MCF 10A (cell line): ENCODE measurements at regions of chr1 and their contacts with region 1.

Region 1: DNA sequence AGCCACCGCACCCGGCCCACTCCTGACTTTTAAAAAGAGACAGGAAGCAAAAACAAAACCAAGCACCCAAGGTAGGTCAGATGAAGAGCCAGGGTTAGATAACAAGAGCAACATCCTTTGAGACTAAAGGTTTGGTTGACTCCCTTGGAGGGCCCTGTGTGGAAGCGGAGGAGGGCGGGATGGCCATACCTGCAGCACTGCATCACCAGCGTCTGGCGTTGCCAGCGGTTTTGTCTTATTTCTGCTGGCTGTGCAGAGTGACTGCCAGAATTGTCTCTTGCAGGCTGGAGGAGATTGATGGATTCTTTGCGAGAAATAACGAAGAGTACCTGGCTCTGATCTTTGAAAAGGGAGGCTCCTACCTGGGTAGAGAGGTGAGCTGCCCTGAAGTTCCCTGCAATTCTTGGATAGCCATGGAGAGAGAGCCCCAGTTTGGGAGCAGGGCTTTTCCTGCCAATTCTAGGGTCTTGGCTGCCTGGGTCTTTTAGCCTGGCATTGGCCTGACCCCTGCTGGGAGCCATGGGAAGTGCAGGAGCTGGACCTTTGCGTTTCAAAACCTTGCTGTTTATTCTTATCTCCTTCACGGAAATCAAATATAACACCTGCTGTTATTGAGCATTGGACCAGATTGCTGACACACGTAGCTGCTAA is 24.0 kb downstream of the QSOX1 start:
- DNase-seq: peak; percentile 72
- H3K4me3 Mint-ChIP-seq: no peak overlapping the region
- H3K27ac Mint-ChIP-seq: peak overlapping the region; percentile 60
- H3K4me1 Mint-ChIP-seq: peaks cover 5% of the 10 kb centered on the region
- H3K27me3 Mint-ChIP-seq: no peaks in the 10 kb centered on the region
- CTCF ChIP-seq: peak; percentile 98

Region 2: GRCh38 chr1:179384027-179384426 is 794.6 kb before region 1 on chr1:
- CTCF ChIA-PET with region 1: interaction called, 10 read pairs
- POLR2A ChIA-PET with region 1: no interaction called
- intact Hi-C with region 1: no loop called
- DNase-seq: no peak
- H3K4me3 Mint-ChIP-seq: no peak overlapping the region
- H3K27ac Mint-ChIP-seq: no peak overlapping the region
- H3K4me1 Mint-ChIP-seq: no peaks in the 10 kb centered on the region
- H3K27me3 Mint-ChIP-seq: no peaks in the 10 kb centered on the region
- CTCF ChIP-seq: no peak

Region 3: GRCh38 chr1:180027949-180028445 is 150.6 kb before region 1 on chr1:
- CTCF ChIA-PET with region 1: interaction called, 10 read pairs
- POLR2A ChIA-PET with region 1: interaction called, 3 read pairs
- intact Hi-C with region 1: no loop called
- DNase-seq: peak; percentile 90
- H3K4me3 Mint-ChIP-seq: no peak overlapping the region
- H3K27ac Mint-ChIP-seq: peak overlapping the region; percentile 69
- H3K4me1 Mint-ChIP-seq: peaks cover 22% of the 10 kb centered on the region
- H3K27me3 Mint-ChIP-seq: no peaks in the 10 kb centered on the region
- CTCF ChIP-seq: no peak

Region 4: DNA sequence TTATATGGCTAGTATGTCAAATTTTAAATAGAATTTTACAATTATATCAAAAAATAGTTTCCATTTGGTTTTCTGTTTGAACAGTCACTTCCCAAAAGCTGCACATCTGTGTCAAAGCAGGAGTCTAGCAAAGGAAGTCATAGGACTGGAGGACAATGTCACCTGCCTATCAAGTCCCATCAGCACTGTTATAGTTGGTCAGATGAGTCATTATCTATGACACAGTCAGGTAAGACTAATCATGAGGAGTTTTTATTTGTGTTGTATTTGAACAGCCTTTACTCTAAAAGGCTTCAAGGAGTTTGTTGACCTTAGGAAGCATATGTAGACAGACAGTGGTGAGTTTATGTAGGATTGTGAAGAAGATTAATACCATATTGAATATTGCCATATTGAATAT is 98.2 kb before region 1 on chr1:
- CTCF ChIA-PET with region 1: interaction called, 39 read pairs
- POLR2A ChIA-PET with region 1: no interaction called
- intact Hi-C with region 1: no loop called
- DNase-seq: peak; percentile 12
- H3K4me3 Mint-ChIP-seq: no peak overlapping the region
- H3K27ac Mint-ChIP-seq: peak overlapping the region; percentile 21
- H3K4me1 Mint-ChIP-seq: peaks cover 6% of the 10 kb centered on the region
- H3K27me3 Mint-ChIP-seq: no peaks in the 10 kb centered on the region
- CTCF ChIP-seq: no peak

Region 5: GRCh38 chr1:180123463-180123936 is 55.1 kb before region 1 on chr1:
- CTCF ChIA-PET with region 1: interaction called, 15 read pairs
- POLR2A ChIA-PET with region 1: interaction called, 3 read pairs
- intact Hi-C with region 1: no loop called
- DNase-seq: peak; percentile 96
- H3K4me3 Mint-ChIP-seq: no peak overlapping the region
- H3K27ac Mint-ChIP-seq: peak overlapping the region; percentile 80
- H3K4me1 Mint-ChIP-seq: peaks cover 25% of the 10 kb centered on the region
- H3K27me3 Mint-ChIP-seq: no peaks in the 10 kb centered on the region
- CTCF ChIP-seq: no peak

Region 6: GRCh38 chr1:180482425-180483275 is 304.0 kb after region 1 on chr1:
- CTCF ChIA-PET with region 1: interaction called, 21 read pairs
- POLR2A ChIA-PET with region 1: interaction called, 3 read pairs
- intact Hi-C with region 1: no loop called
- DNase-seq: peak; percentile 79
- H3K4me3 Mint-ChIP-seq: no peak overlapping the region
- H3K27ac Mint-ChIP-seq: no peak overlapping the region
- H3K4me1 Mint-ChIP-seq: peaks cover 17% of the 10 kb centered on the region
- H3K27me3 Mint-ChIP-seq: no peaks in the 10 kb centered on the region
- CTCF ChIP-seq: peak; percentile 68